Stomach (tissue), 19 donors: ENCODE measurements at regions of chr12 and their contacts with region 1.

Region 1: DNA sequence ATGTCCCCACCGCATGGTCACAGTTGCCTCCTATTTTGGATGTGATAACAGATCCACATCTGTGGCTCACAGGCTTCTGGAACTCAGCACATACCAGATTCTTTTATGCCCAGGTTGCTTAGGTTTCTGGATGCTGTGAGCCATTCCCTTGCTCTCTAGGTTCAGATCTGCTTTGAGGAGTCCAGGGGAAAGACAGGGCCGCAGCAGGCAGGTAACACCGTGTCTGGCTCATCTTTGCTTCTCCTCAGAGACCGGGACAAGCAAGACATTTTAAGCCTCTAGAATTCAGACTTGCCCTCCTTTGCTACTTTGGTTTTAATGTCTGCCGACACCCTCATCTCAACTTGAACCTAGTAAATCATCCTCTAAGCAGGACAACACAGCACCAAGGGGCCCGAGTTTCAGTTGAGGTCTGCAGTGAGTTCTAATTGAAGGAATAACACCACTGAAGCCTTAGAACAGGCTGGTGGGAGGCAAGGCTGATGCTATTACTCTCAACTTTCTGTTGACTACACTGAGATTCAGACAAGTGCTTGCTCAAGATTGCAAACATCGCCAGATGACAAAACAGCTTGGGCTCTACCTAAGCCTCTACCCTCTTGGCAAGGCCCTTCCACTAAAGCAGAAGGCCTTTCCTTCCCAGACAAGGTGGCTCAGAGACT is 55.3 kb downstream of the MDM2 start:
- DNase-seq: no peak
- H3K4me3 ChIP-seq: no peak overlapping the region
- H3K27ac ChIP-seq: no peak overlapping the region
- H3K4me1 ChIP-seq: peaks cover 0 to 8% (median 0%) of the 10 kb centered on the region in 4 donors
- H3K27me3 ChIP-seq: no peaks in the 10 kb centered on the region
- CTCF ChIP-seq: no peak
- EP300 ChIP-seq: no peak
- POLR2A ChIP-seq: no peak

Region 2: GRCh38 chr12:68158432-68158831 is 704.8 kb before region 1 on chr12:
- intact Hi-C with region 1: no loop called
- DNase-seq: peak in 1 of 2 donors; percentile 12
- H3K4me3 ChIP-seq: no peak overlapping the region
- H3K27ac ChIP-seq: no peak overlapping the region
- H3K4me1 ChIP-seq: no peaks in the 10 kb centered on the region
- H3K27me3 ChIP-seq: no peaks in the 10 kb centered on the region
- CTCF ChIP-seq: peak in 2 of 7 experiments; percentile 18 to 36
- EP300 ChIP-seq: no peak
- POLR2A ChIP-seq: no peak

Region 3: GRCh38 chr12:68648179-68648578 is 215.1 kb before region 1 on chr12:
- intact Hi-C with region 1: no loop called
- DNase-seq: peak in 1 of 2 donors; percentile 24
- H3K4me3 ChIP-seq: no peak overlapping the region
- H3K27ac ChIP-seq: peak overlapping the region in 1 of 5 donors; percentile 5
- H3K4me1 ChIP-seq: peaks cover 4 to 57% (median 35%) of the 10 kb centered on the region in 4 donors
- H3K27me3 ChIP-seq: no peaks in the 10 kb centered on the region
- CTCF ChIP-seq: no peak
- EP300 ChIP-seq: no peak
- POLR2A ChIP-seq: no peak

Region 4: GRCh38 chr12:69070319-69071090 is 207.3 kb after region 1 on chr12:
- intact Hi-C with region 1: loop called (anchors 5 kb)
- DNase-seq: peak; percentile 78 to 84
- H3K4me3 ChIP-seq: no peak overlapping the region
- H3K27ac ChIP-seq: no peak overlapping the region
- H3K4me1 ChIP-seq: peaks cover 0 to 41% (median 2%) of the 10 kb centered on the region in 4 donors
- H3K27me3 ChIP-seq: no peaks in the 10 kb centered on the region
- CTCF ChIP-seq: peak in 5 of 7 experiments; percentile 55 to 89 (median 86)
- EP300 ChIP-seq: no peak
- POLR2A ChIP-seq: no peak